Activated B cell treated with CpG ODN at 0.5 μM for 24 hours (primary cell): ENCODE measurements at regions of chr7 and their contacts with region 1.

Region 1: DNA sequence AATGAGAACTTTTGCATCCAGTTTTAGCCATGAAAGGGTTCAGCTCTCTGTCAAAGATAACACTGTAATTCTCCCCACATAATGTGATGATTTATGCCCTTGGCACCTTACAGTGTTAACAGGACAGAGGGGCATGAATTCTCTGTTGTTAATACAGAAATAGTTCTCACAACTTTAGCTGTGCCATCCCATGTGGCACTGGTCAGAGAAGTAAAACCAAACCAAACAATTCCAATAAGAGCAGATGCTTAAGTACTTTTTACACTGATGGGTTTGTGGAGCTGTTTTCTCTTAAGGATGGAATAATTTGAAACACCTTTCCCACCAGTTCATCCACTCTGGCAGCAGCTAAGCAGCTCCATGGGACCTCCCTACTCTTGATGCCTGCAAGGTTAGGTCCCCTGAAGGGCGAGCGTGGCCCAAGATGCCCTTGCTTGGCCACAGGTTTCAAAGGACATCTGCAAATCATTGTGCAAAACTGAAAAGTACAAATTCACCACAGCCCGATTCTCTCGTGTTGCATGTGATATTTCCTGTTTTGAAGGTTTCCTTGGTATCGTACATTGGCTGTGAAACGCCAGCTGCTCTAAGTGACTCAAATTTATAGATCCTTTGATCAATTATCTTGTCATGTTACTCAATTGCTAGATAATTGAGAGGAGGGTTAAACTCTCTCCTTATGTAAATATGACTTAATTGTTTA is 82.5 kb upstream of the CREB5 start:
- DNase-seq: no peak
- ATAC-seq: peak; percentile 59
- H3K4me3 Mint-ChIP-seq: peak overlapping the region; percentile 68
- H3K27ac Mint-ChIP-seq: peak overlapping the region; percentile 41
- H3K4me1 Mint-ChIP-seq: peaks cover 20% of the 10 kb centered on the region
- H3K27me3 Mint-ChIP-seq: peaks cover 4% of the 10 kb centered on the region
- CTCF ChIP-seq: no peak

Region 2: DNA sequence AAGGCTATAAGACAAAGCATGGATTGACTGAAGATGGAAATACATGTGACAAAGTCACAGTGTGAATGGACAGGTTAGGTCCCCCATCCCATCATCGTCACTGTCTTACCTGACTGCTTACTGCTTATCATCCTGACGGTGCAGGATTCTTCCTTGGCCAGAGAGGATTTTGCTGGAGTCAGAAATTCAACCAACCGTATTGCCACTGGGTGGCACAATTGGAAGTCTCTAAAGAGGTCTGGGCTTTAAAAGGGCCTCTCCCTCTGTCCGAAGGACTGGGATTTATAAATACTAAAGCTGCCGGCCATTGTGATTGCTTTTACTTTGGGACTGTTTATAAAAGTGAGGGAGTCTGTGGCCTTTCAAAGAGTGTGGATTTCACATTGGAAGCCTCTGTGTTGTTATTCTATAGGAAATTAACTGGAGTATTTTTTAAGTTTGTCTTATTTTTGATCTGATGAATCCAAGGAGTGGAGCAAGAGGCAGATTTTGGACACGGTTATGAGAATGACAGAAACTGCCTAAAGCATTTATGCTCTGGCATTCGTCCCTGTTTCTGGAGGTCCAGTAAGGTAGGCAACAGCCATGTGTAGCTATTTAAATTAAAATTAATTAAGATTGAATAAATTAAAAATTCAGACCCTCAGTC is 30.8 kb before region 1 on chr7:
- CTCF ChIA-PET with region 1: interaction called, 4 read pairs
- POLR2A ChIA-PET with region 1: no interaction called
- intact Hi-C with region 1: loop called (anchors 1 kb)
- DNase-seq: no peak
- ATAC-seq: no peak
- H3K4me3 Mint-ChIP-seq: no peak overlapping the region
- H3K27ac Mint-ChIP-seq: no peak overlapping the region
- H3K4me1 Mint-ChIP-seq: peaks cover 14% of the 10 kb centered on the region
- H3K27me3 Mint-ChIP-seq: no peaks in the 10 kb centered on the region
- CTCF ChIP-seq: no peak